Activated CD4-positive, alpha-beta memory T cell treated with anti-CD3 and anti-CD28 coated beads, Interleukin-2, amount 10 ng/mL, durations not matched to agents 7 days and 5 days (primary cell): ENCODE measurements at regions of chr5 and their contacts with region 1.

Region 1: GRCh38 chr5:132820162-132820754 is 7.2 kb downstream of the SOWAHA start:
- DNase-seq: peak; percentile 92
- H3K4me3 Mint-ChIP-seq: no peak overlapping the region
- H3K27ac Mint-ChIP-seq: no peak overlapping the region
- H3K4me1 Mint-ChIP-seq: peaks cover 14% of the 10 kb centered on the region
- H3K27me3 Mint-ChIP-seq: peaks cover 39% of the 10 kb centered on the region

Region 2: GRCh38 chr5:132500931-132501630 is 319.2 kb before region 1 on chr5:
- CTCF ChIA-PET with region 1: interaction called, 20 read pairs
- POLR2A ChIA-PET with region 1: interaction called, 4 read pairs
- DNase-seq: peak; percentile 78
- H3K4me3 Mint-ChIP-seq: no peak overlapping the region
- H3K27ac Mint-ChIP-seq: no peak overlapping the region
- H3K4me1 Mint-ChIP-seq: peaks cover 39% of the 10 kb centered on the region
- H3K27me3 Mint-ChIP-seq: peaks cover 3% of the 10 kb centered on the region

Region 3: DNA sequence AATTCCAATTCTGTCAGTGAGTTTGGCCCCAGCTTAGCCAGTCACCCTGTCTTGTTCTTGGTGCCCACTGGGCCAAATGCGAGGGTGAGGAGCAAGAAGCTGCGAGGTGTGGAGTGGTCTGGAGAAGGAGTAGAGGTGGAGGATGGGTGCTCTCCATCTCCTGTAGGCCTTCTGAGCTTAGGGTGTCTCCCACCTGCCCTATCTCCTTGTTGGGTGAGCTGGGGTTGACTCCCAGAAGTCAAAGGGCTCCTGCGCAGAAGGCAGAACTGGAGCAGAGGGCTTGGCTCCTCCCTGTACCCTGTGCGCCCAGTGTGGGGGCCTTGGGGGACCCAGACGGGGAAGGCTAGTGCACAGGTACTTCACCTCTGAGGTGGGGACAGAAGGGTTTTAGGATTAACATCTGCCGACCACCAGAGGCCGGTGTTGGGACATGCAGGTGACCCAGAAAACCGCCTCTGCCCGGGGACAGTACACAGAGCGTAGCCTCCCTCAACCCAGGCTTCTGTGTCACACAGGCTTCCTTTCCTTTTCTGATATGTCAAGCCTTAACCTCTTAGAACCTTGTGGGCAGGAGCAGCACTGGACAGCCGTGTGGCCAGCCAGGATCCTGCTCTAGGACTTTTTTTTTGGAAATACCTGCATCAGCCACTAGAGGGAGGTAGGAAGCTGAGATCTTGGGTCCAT is 293.8 kb before region 1 on chr5:
- CTCF ChIA-PET with region 1: interaction called, 78 read pairs
- POLR2A ChIA-PET with region 1: interaction called, 5 read pairs
- DNase-seq: peak; percentile 34
- H3K4me3 Mint-ChIP-seq: no peak overlapping the region
- H3K27ac Mint-ChIP-seq: no peak overlapping the region
- H3K4me1 Mint-ChIP-seq: peaks cover 55% of the 10 kb centered on the region
- H3K27me3 Mint-ChIP-seq: peaks cover 2% of the 10 kb centered on the region

Region 4: DNA sequence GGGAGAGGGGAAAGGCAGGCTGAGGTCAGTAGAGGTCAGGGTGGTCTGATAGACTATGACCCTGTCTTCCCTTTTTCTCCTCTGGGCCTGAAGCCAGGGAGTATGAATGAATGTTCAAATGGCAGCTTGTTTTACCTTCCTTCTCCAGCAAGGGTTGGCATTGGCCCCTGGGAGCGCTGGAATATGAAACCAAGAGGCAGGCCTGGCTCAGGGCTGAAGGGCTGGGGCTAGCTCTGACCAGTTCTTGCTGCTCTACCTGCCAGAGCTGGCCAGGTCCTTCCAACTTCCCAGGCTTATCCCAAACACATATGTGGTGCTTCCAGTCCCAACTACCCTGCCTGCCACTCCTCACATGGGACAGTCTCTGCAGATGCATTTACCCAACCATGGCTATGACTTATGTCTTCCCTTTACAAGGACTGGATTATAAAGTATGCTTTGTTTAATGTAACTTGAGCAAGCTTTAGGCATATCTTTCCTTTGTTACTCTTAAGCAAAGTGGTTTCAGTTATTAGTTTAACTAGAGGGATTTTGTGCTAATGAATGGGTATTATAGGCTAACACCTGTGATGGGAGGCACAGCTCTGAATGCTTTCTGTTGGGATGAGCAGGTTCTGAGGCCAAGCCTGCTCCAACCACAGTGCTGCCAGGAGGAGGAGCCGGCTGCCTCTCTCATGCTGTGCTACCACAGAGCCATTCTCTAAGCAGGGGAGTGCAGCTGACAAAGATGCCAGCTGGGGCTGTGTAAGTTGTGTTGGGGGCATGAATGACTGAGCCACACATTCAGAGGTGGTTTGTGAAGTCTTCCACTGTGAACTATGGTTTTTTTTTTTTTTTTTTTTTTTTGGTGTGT is 66.9 kb before region 1 on chr5:
- CTCF ChIA-PET with region 1: interaction called, 20 read pairs
- POLR2A ChIA-PET with region 1: no interaction called
- DNase-seq: no peak
- H3K4me3 Mint-ChIP-seq: no peak overlapping the region
- H3K27ac Mint-ChIP-seq: no peak overlapping the region
- H3K4me1 Mint-ChIP-seq: peaks cover 37% of the 10 kb centered on the region
- H3K27me3 Mint-ChIP-seq: no peaks in the 10 kb centered on the region

Region 5: DNA sequence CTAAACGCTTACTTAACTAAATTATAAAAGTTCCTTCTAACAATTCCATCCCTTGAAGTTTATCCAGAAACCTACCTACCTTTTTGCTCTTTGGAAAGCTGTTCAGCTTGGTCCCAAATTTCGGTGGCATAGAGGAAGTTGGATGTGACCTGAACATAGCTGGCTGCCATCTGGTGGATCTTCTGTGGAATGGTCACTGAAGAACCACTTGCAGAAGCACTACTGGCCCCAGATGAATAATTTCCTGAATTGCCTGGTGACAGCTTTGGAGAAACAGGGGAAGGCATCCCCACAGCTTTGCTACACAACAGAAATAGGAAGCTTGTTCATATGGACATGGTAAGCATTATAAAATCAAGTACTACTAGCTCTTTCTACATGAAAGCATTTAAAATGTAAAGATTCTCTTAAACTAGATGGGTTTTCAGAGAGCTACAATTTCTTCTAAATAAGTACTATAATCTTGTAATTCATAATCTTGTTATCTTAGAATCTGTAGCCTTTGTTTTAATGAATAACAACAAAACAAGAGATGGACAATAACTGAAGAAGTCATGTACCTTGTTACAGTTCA is 63.1 kb after region 1 on chr5:
- CTCF ChIA-PET with region 1: interaction called, 10 read pairs
- POLR2A ChIA-PET with region 1: no interaction called
- DNase-seq: peak; percentile 29
- H3K4me3 Mint-ChIP-seq: no peak overlapping the region
- H3K27ac Mint-ChIP-seq: peak overlapping the region; percentile 37
- H3K4me1 Mint-ChIP-seq: peaks cover 10% of the 10 kb centered on the region
- H3K27me3 Mint-ChIP-seq: no peaks in the 10 kb centered on the region